Activated T-helper 1 cell treated with anti-CD3 and anti-CD28 coated beads, Interleukin-12 subunit alpha, Interleukin-12 subunit beta, Interleukin-2, Interleukin-4 antibody, amounts not matched to agents 30 ng/mL and 10 ng/mL and 1 ng/mL, durations not matched to agents 14 hours and 24 hours and 36 hours (primary cell): ENCODE measurements at regions of chr6 and their contacts with region 1.

Region 1: DNA sequence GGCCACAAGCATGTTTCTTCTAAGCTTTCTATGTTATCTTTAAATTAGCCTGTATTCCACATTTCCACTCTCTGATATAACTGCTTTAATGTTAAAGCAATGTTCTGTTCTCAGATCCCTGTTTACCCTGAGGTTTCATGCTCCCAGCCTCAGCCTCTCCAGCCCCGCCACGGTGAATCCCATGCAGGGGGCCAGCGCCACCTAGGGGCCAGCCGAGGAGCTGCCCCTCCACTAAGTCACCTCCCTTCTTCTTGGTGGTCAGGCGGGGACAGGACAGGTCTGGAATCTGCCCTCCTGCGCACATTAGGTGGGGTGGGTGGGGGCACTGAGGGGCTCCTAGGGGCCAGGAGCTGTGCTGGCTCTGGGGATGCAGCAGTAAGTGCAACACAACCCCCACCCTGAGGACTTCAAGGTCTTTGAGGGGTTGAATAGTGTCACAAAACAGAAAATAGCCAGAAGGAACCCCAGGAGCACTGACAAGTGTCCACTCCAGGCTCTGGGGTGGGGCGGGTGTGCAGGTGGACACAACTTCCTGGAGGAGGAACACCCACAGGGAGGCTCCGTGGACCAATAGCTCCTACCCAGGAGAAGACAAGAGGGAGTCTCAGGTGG is 61.6 kb downstream of the RAB44 start:
- DNase-seq: peak; percentile 76
- H3K4me3 Mint-ChIP-seq: no peak overlapping the region
- H3K27ac Mint-ChIP-seq: peak overlapping the region; percentile 61
- H3K4me1 Mint-ChIP-seq: peaks cover 49% of the 10 kb centered on the region
- H3K27me3 Mint-ChIP-seq: no peaks in the 10 kb centered on the region

Region 2: GRCh38 chr6:36350681-36351571 is 408.3 kb before region 1 on chr6:
- intact Hi-C with region 1: no loop called
- DNase-seq: no peak
- H3K4me3 Mint-ChIP-seq: no peak overlapping the region
- H3K27ac Mint-ChIP-seq: no peak overlapping the region
- H3K4me1 Mint-ChIP-seq: peaks cover 6% of the 10 kb centered on the region
- H3K27me3 Mint-ChIP-seq: peaks cover 52% of the 10 kb centered on the region

Region 3: GRCh38 chr6:36423101-36423824 is 336.0 kb before region 1 on chr6:
- intact Hi-C with region 1: loop called (anchors 5 kb)
- DNase-seq: peak; percentile 97
- H3K4me3 Mint-ChIP-seq: peak overlapping the region; percentile 88
- H3K27ac Mint-ChIP-seq: peak overlapping the region; percentile 84
- H3K4me1 Mint-ChIP-seq: peaks cover 21% of the 10 kb centered on the region
- H3K27me3 Mint-ChIP-seq: peaks cover 11% of the 10 kb centered on the region

Region 4: DNA sequence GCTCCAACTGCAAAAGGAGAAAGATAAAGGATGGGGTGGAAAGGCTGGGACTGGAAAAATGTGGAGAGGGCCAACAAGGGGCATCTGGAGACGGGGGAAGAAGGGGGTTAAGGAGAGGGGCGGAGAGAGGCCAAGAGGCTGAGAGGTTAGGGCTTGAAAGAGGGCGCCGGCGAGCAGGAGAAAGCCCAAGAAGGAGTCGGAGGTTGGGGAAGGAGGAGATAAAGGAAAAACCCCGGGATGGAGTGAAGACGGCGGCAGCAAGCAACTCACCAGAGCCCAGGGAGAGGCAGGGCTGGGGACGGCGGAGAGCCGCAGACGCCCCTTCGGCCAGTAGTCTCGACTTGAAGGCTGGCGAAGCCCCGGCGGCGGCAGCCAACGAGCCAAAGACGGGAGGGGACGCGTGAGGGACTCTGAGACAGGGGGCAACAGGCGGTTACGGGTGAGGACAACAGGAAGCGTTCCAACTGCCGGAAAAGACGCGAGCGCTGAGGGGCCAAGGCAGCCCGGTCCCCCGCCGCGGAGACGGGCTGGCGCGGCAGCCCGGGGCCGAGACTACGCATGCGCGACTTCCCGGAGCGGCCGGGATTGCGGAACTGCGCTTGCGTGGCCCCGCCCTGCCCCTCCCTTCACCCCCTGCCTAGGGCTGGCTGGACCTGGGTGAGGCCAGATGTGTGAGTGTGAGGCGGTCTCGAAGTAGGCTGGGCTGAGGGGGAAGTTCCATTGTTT is 212.2 kb before region 1 on chr6 and contains the start of gene STK38:
- intact Hi-C with region 1: loop called (anchors 5 kb)
- DNase-seq: peak; percentile 84
- H3K4me3 Mint-ChIP-seq: peak within 1 kb of the TSS; percentile 95
- H3K27ac Mint-ChIP-seq: peak within 1 kb of the TSS; percentile 92
- H3K4me1 Mint-ChIP-seq: peaks cover 50% of the 10 kb centered on the region
- H3K27me3 Mint-ChIP-seq: peaks cover 2% of the 10 kb centered on the region
- total RNA-seq, gene STK38: 23.5 and 23.6 TPM in 2 replicates

Region 5: DNA sequence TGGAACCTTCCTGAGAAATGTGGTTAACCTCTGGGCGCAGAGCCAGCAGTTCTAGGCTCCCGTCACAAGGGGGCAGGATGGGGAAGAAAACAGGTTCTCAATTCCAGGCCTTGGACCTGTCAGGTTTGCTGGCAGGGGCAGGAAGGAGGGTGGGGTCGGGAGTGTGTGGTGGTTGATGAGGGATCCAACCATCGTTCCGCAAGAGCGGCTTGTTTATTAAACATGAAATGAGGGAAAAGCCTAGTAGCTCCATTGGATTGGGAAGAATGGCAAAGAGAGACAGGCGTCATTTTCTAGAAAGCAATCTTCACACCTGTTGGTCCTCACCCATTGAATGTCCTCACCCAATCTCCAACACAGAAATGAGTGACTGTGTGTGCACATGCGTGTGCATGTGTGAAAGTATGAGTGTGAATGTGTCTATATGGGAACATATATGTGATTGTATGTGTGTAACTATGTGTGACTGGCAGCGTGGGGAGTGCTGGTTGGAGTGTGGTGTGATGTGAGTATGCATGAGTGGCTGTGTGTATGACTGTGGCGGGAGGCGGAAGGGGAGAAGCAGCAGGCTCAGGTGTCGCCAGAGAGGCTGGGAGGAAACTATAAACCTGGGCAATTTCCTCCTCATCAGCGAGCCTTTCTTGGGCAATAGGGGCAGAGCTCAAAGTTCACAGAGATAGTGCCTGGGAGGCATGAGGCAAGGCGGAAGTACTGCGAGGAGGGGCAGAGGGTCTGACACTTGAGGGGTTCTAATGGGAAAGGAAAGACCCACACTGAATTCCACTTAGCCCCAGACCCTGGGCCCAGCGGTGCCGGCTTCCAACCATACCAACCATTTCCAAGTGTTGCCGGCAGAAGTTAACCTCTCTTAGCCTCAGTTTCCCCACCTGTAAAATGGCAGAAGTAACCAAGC is 135.5 kb before region 1 on chr6:
- intact Hi-C with region 1: loop called (anchors 1 kb)
- DNase-seq: peak; percentile 65
- H3K4me3 Mint-ChIP-seq: no peak overlapping the region
- H3K27ac Mint-ChIP-seq: peak overlapping the region; percentile 9
- H3K4me1 Mint-ChIP-seq: peaks cover 33% of the 10 kb centered on the region
- H3K27me3 Mint-ChIP-seq: no peaks in the 10 kb centered on the region

Region 6: GRCh38 chr6:36685936-36686667 is 73.2 kb before region 1 on chr6:
- intact Hi-C with region 1: no loop called
- DNase-seq: no peak
- H3K4me3 Mint-ChIP-seq: no peak overlapping the region
- H3K27ac Mint-ChIP-seq: no peak overlapping the region
- H3K4me1 Mint-ChIP-seq: peaks cover 60% of the 10 kb centered on the region
- H3K27me3 Mint-ChIP-seq: no peaks in the 10 kb centered on the region

Region 7: DNA sequence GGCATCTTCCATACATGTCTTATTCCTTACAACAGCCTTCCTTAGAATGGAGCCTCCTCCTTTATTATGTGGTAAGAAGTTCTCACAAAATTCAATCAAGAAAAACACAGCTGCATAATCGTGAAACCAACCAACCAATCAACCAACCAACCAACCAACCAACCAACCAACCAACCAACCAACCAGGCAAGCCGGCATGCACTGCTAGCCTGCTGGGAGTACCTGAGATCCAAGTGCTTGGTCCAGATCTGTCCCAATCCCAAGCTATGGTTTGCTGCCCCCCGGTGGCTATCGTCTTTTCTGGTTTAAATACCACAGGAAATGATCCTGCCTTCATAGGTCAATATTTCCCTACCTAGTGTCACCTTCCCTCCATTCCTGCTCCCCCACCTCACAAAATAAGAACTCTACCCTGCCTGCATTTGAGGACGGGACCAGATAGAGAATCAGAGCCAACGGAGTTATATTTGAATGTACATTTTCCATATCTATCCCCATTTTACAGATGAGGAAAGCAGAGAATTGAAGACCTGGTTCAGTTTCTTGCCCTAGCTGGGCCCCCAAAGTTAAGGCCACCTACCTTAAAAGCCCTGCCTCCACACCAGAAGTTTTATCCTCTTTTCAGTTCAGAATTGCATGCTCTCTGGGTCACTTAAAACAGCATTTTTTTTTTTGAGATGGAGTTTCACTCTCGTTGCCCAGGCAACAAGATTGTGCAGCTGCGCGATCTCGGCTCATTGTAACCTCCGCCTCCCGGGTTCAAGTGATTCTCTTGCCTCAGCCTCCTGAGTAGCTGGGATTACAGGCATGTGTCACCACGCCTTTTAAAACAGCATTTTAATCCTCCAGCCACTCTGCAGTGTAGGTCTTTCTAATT is 34.5 kb before region 1 on chr6:
- intact Hi-C with region 1: loop called (anchors 1 kb)
- DNase-seq: peak; percentile 13
- H3K4me3 Mint-ChIP-seq: no peak overlapping the region
- H3K27ac Mint-ChIP-seq: no peak overlapping the region
- H3K4me1 Mint-ChIP-seq: peaks cover 47% of the 10 kb centered on the region
- H3K27me3 Mint-ChIP-seq: no peaks in the 10 kb centered on the region

Region 8: GRCh38 chr6:37207903-37208456 is 448.7 kb after region 1 on chr6:
- intact Hi-C with region 1: loop called (anchors 5 kb)
- DNase-seq: peak; percentile 83
- H3K4me3 Mint-ChIP-seq: peak overlapping the region; percentile 37
- H3K27ac Mint-ChIP-seq: peak overlapping the region; percentile 86
- H3K4me1 Mint-ChIP-seq: peaks cover 61% of the 10 kb centered on the region
- H3K27me3 Mint-ChIP-seq: no peaks in the 10 kb centered on the region